Gastrocnemius medialis (tissue), 4 donors: ENCODE measurements at regions of chr5 and their contacts with region 1.

Region 1: GRCh38 chr5:103582364-103582763 is 19.8 kb upstream of the NUDT12 start:
- DNase-seq: no peak
- ATAC-seq: peak in 1 of 2 donors; percentile 46
- H3K4me3 ChIP-seq: no peak overlapping the region
- H3K27ac ChIP-seq: no peak overlapping the region
- H3K4me1 ChIP-seq: no peaks in the 10 kb centered on the region
- H3K27me3 ChIP-seq: no peaks in the 10 kb centered on the region
- CTCF ChIP-seq: peak in 3 of 5 experiments; percentile 27 to 40 (median 32)
- POLR2A ChIP-seq: no peak

Region 2: GRCh38 chr5:103511554-103511885 is 70.8 kb before region 1 on chr5:
- in situ Hi-C with region 1: no loop called
- intact Hi-C with region 1: no loop called
- DNase-seq: no peak
- ATAC-seq: no peak
- H3K4me3 ChIP-seq: no peak overlapping the region
- H3K27ac ChIP-seq: no peak overlapping the region
- H3K4me1 ChIP-seq: no peaks in the 10 kb centered on the region
- H3K27me3 ChIP-seq: no peaks in the 10 kb centered on the region
- CTCF ChIP-seq: no peak
- POLR2A ChIP-seq: no peak

Region 3: DNA sequence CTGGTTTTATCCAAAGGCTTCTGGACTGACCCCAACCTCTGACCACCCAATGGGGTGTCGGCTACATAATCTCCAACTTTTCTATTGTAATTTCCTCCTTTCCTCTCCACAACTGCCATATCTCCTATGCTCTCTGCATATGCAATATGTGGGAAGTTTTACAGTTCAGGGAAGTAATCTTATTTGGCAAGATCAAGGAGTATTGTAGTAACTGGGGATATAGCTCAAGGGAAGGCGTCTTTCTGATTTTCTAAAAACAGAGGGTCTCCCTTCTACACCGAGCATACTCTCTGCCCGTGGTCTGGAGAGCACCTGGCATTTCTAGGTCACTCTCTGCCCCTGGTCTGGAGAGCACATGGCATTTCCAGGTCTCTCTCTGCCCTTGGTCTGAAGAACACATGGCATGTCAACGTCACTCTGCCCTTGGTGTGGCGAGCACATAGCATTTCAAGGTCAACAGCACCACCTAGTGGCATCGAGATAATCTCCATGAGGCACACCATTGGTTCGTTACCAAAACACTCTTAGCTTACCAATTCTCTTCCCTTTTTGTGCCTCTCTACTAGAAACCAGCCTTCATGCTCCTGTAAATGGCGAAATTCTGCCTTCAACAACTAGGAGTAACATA is 596.6 kb after region 1 on chr5:
- in situ Hi-C with region 1: loop called (anchors 25 kb)
- intact Hi-C with region 1: loop called (anchors 2 kb)
- DNase-seq: peak in 1 of 2 donors; percentile 51
- ATAC-seq: peak in 1 of 2 donors; percentile 94
- H3K4me3 ChIP-seq: no peak overlapping the region
- H3K27ac ChIP-seq: no peak overlapping the region
- H3K4me1 ChIP-seq: no peaks in the 10 kb centered on the region
- H3K27me3 ChIP-seq: no peaks in the 10 kb centered on the region
- CTCF ChIP-seq: peak in 3 of 5 experiments; percentile 31 to 41 (median 41)
- POLR2A ChIP-seq: no peak